ENCODE measurements at regions of chr9 and their contacts with region 1.

Region 1: DNA sequence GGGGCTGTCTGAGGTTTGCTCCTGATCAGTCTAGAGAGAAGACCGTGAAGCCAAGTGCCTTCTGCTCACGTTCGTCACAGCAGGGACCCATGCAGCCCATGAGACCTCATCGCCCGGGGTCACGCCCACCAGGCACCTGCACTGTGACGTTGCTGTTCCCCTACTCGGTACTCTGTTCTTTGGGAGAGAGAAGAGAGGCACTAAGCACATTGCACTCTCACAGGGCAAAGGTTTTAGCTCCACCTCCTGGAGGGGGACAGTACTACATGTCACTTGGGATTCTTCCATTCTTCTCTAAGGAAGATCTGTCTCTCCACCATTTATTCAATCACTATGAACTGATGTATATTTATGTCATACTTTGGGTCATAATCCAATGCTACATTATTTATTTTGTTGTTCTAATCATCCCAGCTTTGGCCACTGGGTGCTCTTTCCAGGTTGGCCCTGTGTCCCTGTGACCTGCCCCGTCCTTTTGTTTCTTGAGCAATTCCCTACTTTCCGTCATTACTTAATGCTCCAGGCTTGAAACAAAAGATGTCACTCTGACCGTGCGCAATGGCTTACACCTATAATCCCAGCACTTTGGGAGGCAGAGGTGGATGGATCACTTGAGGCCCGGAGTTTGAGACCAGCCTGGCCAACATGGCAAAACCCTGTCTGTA is 31.4 kb upstream of the BRD3 start:
- DNase-seq: peak; percentile 34
- H3K4me3 Mint-ChIP-seq: no peak overlapping the region
- H3K27ac Mint-ChIP-seq: no peak overlapping the region
- H3K4me1 Mint-ChIP-seq: peaks cover 3% of the 10 kb centered on the region
- H3K27me3 Mint-ChIP-seq: no peaks in the 10 kb centered on the region

Region 2: DNA sequence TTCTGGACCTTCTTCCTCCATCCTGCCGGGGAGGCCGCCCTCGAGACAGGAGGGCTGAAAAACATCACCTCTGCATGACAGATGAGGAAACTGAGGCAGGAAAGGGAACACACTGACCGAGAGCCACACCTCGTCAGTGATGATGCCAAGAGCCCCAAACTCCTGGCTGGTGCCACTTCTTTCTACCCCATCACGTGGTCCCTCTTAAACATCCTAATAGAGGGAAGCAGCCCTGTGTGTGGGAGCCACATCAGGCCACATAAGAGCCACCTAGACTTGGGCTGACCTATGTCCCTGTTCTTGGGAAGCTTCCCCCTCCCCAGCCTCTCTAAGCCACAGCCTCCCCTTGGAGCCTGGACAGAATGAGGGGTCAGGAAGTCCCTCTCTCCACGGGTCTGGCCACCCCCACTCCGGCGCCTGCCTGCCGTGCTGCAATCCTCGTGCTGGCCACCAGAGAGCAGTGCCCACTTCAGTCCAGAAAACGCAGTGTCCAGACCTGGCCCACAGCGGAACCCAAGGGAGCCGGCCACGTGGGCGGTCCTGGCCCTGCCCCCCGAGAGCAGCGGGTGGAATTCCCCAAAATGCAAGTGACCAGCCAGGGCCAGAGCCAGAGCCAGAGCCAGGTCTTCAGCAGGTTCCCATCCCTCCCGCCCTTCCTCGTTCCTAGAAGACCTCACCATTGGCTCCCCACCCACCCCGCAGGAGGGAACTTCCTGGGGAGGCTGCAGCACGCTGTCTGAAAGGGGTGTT is 306.4 kb before region 1 on chr9:
- intact Hi-C with region 1: loop called (anchors 5 kb)
- DNase-seq: peak; percentile 34
- H3K4me3 Mint-ChIP-seq: no peak overlapping the region
- H3K27ac Mint-ChIP-seq: no peak overlapping the region
- H3K4me1 Mint-ChIP-seq: peaks cover 3% of the 10 kb centered on the region
- H3K27me3 Mint-ChIP-seq: no peaks in the 10 kb centered on the region

Region 3: GRCh38 chr9:134024828-134025605 is 74.2 kb before region 1 on chr9 and contains the start of gene BRD3OS:
- intact Hi-C with region 1: loop called (anchors 10 kb)
- DNase-seq: peak; percentile 90
- H3K4me3 Mint-ChIP-seq: peak within 1 kb of the TSS; percentile 72
- H3K27ac Mint-ChIP-seq: no peak within 1 kb of the TSS
- H3K4me1 Mint-ChIP-seq: peaks cover 4% of the 10 kb centered on the region
- H3K27me3 Mint-ChIP-seq: peaks cover 3% of the 10 kb centered on the region
- total RNA-seq, gene BRD3OS: 12.3 and 15.8 TPM in 2 replicates

Region 4: DNA sequence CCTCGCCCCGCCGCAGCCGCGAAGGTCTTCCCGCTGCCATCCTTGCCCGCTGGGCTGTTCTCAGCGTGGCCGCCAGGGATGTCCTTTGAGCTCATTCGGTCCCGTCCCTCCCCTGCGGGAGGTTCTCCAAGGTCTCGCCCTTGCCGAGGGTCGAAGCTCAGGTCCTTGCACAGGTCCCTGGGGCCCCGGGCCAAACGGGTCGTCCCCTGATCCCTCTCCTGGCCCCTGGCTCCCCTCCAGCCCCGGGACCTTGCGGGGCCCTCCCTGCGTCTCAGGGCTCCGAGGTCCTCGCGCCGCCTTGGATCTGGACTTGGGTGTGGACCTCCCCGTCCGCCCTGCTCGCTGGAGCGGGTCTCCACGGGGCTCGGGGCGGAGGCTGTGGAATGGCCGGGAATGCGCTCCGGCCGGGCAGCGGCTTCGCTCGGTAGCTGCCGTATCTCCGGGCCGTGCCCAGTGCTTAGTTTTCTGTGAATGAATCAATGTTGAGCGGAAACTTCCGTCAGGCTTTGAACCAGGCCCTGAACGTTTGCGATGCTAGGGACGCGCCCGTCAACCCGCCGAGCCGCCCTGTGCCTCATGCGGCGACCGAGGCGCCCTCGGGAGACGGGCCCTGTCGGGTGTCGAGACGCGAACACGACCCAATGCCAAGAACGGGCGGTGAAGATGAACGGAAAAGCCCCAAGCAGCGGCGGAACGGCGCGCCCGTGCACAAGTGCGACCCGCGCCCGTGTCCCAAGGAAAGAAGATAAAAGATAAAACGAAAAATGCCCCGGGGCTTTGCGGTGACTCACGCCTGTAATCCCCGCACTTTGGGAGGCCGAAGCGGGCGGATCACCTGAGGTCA is 64.3 kb after region 1 on chr9:
- intact Hi-C with region 1: no loop called
- DNase-seq: peak; percentile 62
- H3K4me3 Mint-ChIP-seq: no peak overlapping the region
- H3K27ac Mint-ChIP-seq: no peak overlapping the region
- H3K4me1 Mint-ChIP-seq: peaks cover 9% of the 10 kb centered on the region
- H3K27me3 Mint-ChIP-seq: no peaks in the 10 kb centered on the region